ENCODE measurements at regions of chr12 and their contacts with region 1.

Region 1: DNA sequence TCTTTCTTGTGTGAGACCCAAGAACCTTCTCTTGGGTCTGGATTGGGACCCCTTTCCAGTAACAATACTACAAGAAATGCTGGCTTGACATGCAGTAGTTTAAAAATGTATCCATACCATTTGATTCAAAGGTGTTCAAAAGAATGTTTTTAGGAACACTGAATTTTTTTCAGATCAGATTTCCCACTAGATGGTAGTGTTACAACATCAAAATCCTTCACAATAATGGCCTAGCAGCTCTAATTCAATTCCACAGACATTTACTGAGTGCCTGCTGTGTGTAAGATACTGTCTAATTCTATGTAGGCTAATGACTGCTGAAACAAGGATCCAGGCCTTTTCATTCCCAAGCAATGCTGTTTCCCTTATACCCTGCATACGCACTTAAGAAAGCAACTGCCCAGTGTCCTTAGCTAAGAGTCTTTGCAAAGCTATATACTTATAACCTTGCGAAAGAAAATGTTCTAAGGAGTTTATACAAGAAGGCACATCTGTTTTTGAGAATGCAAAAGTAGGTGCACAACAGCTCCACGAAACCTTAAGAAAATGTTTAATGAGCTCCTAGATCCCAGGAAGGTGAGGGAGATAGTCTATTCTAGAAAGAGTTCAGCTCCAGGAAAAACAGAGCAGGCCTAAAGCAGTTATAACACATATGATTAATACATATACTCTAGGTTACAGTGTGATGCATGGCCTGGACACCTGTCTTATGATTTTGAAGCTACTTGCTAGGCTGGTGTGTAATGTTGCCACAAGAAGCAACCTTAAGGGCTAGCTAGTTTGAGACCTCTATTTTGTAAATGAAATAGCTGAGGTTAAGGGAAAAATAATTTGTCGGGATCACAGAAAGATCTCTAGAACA is 50.9 kb upstream of the PKP2 start:
- DNase-seq: no peak
- CTCF ChIP-seq: no peak

Region 2: GRCh38 chr12:34022079-34022830 is 1074.8 kb after region 1 on chr12 and contains the start of gene ALG10:
- in situ Hi-C with region 1: loop called (anchors 25 kb)
- DNase-seq: peak; percentile 72
- CTCF ChIP-seq: peak; percentile 66

Measured in GM13976 (cell line).